ENCODE measurements at regions of chr20 and their contacts with region 1.

Region 1: DNA sequence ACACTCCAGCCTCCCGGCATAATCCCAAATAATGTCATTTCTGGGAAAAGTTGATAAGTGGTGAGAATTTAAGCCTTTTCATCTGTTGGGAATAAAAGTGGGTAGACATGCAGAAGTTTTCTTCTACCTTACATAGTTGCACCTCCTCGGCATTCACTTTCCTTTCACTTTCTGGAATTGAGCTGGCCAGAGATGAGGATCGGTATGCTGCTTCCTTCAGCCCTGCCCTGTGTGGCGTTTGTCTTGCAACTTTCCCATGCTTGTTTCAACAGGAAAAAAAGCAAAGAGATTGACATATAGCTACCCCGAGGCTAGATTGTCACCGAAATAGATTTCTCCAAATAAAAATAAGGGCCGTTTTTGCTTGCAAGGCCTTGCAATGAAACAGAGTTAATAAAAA is 65.8 kb upstream of the JAG1 start:
- DNase-seq: no peak
- H3K4me3 ChIP-seq: no peak overlapping the region; the same call in 1 of the 2 replicates
- H3K27ac ChIP-seq: no peak overlapping the region
- H3K27me3 ChIP-seq: no peaks in the 10 kb centered on the region
- CTCF ChIP-seq: no peak

Region 2: DNA sequence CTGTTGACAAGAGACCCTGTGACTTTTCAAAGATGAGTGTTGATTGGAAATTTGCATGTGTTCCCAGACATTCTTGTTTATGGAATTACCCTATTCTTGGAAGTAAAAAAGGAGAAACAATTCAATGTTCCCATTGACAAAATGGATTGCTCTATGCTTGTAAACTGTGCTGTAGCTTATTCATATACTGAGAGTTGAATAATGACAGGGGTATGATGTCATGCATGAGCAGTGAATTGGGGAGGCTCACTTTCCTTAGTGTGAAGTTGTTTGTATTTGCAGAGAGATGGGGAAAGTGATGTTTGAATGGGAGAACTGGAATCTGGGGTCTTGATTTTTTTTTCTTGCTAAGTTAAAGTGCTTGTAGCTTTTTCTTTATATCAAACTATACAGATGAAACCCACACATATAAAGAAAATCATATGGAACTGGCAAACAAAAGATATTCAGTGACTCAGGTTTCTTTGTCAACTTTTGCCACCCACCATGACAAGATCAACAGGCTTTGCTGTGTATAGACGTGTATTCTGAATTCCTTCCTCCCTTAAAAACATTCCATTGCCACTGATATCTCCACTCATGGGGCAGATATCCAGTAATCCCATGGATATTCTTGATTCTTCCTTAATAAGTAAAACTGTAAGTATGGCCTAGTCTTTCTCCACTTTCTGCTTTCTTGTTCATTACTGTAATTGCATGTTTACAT is 32.0 kb after region 1 on chr20:
- CTCF ChIA-PET with region 1: interaction called, 11 read pairs
- POLR2A ChIA-PET with region 1: no interaction called
- DNase-seq: no peak
- H3K4me3 ChIP-seq: no peak overlapping the region
- H3K27ac ChIP-seq: no peak overlapping the region
- H3K27me3 ChIP-seq: no peaks in the 10 kb centered on the region
- CTCF ChIP-seq: no peak

Region 3: DNA sequence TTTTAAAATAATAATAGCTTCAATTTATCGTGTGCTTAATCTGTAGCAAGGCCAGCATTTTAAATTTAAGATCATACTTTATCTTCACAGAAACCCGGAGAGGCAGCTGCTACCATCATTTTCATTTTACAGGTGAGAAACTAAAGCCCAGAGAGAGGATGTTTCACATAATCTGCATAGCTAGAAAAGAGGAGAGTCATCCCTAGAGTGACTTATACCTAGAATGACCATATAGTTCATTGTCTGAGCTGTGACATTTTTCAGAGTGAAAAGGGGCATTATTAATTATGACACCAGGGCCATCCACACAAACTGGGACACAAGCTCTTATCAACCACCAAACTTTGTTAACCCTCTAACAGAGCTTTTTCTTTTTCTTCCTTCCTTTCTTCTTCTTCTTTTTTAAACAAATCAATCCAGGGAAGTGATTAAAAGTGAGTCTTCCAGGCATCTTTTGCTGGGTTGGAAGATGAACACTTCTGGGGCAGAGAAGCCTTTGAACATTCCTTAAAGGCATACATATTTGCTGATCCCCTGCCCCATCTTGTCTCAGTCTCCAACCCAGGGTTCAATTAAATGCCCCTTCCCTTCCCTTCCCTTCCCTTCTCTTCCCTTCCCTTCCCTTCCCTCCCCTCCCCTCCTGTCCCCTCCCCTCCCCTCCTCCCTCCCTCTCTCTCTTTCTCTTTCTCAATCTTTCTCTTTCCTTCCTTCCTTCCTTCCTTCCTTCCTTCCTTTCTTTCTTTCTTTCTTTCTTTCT is 206.7 kb after region 1 on chr20:
- CTCF ChIA-PET with region 1: no interaction called
- POLR2A ChIA-PET with region 1: no interaction called
- DNase-seq: no peak
- H3K4me3 ChIP-seq: no peak overlapping the region
- H3K27ac ChIP-seq: no peak overlapping the region
- H3K27me3 ChIP-seq: peaks cover 2% of the 10 kb centered on the region
- CTCF ChIP-seq: no peak